Mammary epithelial cell (primary cell): ENCODE measurements at regions of chr21 and their contacts with region 1.

Region 1: DNA sequence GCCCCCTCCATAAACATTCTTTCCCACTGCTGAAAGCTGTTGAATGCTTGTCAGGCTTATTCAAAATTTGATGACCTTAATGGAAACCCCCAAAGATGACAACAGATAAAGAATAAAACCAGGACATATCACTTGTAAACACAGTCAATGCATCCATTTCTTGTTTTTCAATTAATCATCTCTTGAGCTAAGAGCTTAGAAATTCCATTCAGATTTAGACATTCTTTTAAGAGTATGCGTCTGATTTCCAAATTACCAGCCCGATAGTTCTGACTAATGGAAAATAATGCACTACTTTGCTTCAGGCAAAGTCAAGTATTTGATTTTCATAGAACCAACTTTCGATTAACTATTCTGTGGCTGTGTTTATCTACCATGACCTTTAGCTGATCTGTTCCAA is 100.6 kb upstream of the RUNX1 start:
- DNase-seq: peak; percentile 84
- H3K4me3 ChIP-seq: no peak overlapping the region
- H3K27ac ChIP-seq: peak overlapping the region; percentile 99
- H3K4me1 ChIP-seq: peaks cover 69% of the 10 kb centered on the region
- H3K27me3 ChIP-seq: no peaks in the 10 kb centered on the region
- CTCF ChIP-seq: no peak

Region 2: GRCh38 chr21:34857874-34858273 is 291.8 kb before region 1 on chr21:
- CTCF ChIA-PET with region 1: no interaction called
- dilution Hi-C with region 1: no loop called
- in situ Hi-C with region 1: no loop called
- intact Hi-C with region 1: no loop called
- DNase-seq: no peak
- H3K4me3 ChIP-seq: no peak overlapping the region
- H3K27ac ChIP-seq: no peak overlapping the region
- H3K4me1 ChIP-seq: no peaks in the 10 kb centered on the region
- H3K27me3 ChIP-seq: no peaks in the 10 kb centered on the region
- CTCF ChIP-seq: no peak

Region 3: DNA sequence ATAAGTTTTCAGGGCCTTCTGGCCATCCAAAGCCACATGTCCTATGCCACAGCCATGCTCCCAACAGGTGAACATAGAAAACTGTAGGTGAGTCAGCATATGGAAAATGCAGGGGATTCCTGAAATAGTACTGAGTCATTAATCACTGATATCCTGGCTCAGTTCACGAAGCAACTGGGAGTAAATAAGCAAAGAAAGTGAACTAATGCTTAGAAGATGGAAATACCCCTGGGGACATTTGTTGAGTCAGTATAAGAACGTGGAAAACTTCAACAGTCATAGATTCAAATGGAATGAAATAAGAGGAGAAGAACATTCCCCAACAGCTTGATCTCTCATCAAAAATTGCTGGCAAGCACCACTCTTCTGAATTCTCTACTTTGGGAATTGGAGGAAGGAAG is 48.3 kb after region 1 on chr21:
- CTCF ChIA-PET with region 1: no interaction called
- dilution Hi-C with region 1: no loop called
- in situ Hi-C with region 1: no loop called
- intact Hi-C with region 1: loop called (anchors 2 kb)
- DNase-seq: peak; percentile 99
- H3K4me3 ChIP-seq: no peak overlapping the region
- H3K27ac ChIP-seq: peak overlapping the region; percentile 96
- H3K4me1 ChIP-seq: peaks cover 23% of the 10 kb centered on the region
- H3K27me3 ChIP-seq: no peaks in the 10 kb centered on the region
- CTCF ChIP-seq: no peak

Region 4: GRCh38 chr21:35390013-35390776 is 240.5 kb after region 1 on chr21:
- CTCF ChIA-PET with region 1: no interaction called
- dilution Hi-C with region 1: no loop called
- in situ Hi-C with region 1: loop called in 1 of 2 experiments (anchors 10 kb)
- intact Hi-C with region 1: no loop called
- DNase-seq: peak; percentile 88
- H3K4me3 ChIP-seq: no peak overlapping the region
- H3K27ac ChIP-seq: peak overlapping the region; percentile 67
- H3K4me1 ChIP-seq: peaks cover 30% of the 10 kb centered on the region
- H3K27me3 ChIP-seq: no peaks in the 10 kb centered on the region
- CTCF ChIP-seq: no peak

Region 5: GRCh38 chr21:35682904-35683549 is 533.3 kb after region 1 on chr21:
- CTCF ChIA-PET with region 1: interaction called, 10 read pairs
- dilution Hi-C with region 1: no loop called
- in situ Hi-C with region 1: no loop called
- intact Hi-C with region 1: no loop called
- DNase-seq: no peak
- H3K4me3 ChIP-seq: no peak overlapping the region
- H3K27ac ChIP-seq: no peak overlapping the region
- H3K4me1 ChIP-seq: no peaks in the 10 kb centered on the region
- H3K27me3 ChIP-seq: no peaks in the 10 kb centered on the region
- CTCF ChIP-seq: no peak